ENCODE measurements at regions of chr6 and their contacts with region 1.

Region 1: GRCh38 chr6:10759312-10759839 is 11.8 kb downstream of the TMEM14B start:
- DNase-seq: peak; percentile 60 to 80 (median 76)
- H3K4me3 ChIP-seq: no peak overlapping the region
- H3K27ac ChIP-seq: no peak overlapping the region
- H3K4me1 ChIP-seq: no peaks in the 10 kb centered on the region
- H3K27me3 ChIP-seq: no peaks in the 10 kb centered on the region

Region 2: GRCh38 chr6:10742251-10742650 is 17.1 kb before region 1 on chr6:
- CTCF ChIA-PET with region 1: interaction called, 20 read pairs
- POLR2A ChIA-PET with region 1: no interaction called
- DNase-seq: no peak
- H3K4me3 ChIP-seq: no peak overlapping the region
- H3K27ac ChIP-seq: no peak overlapping the region
- H3K4me1 ChIP-seq: peaks cover 0 to 10% (median 5%) of the 10 kb centered on the region in 4 experiments
- H3K27me3 ChIP-seq: no peaks in the 10 kb centered on the region

Region 3: DNA sequence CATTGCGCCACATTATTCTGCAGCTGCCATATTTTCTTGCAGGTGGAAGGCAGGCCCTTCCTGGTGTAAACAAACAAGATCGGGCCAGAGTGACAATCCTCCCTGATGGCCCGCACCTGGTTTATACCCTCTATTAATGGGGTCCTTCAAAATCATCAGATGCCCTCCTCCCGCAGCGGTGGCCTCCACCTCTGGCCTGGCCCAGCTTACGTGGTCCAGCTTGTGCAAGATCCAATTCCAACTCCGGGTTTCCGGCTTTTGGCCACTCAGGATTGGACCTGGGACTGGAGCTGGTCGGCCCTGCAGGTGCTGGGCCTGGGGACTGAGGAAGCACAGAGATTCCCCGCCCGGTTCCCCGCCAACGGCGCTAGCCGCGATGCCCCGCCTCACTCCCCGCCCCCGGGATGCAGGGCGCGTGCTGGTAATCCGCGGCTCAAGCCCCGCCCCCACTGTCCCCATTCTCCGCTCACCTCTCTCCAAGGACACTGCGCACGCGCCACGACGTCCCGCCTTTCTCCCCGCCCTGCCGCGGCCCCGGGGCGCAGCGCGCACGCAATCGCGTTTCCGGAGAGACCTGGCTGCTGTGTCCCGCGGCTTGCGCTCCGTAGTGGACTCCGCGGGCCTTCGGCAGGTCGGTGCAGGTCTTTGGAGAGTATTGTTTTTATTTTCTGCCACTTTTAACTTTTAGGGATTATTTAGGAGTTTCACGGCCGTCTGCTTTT is 12.0 kb before region 1 on chr6 and contains the start of gene TMEM14B:
- CTCF ChIA-PET with region 1: interaction called, 20 read pairs
- POLR2A ChIA-PET with region 1: no interaction called
- DNase-seq: peak; percentile 95 to 98 (median 97)
- H3K4me3 ChIP-seq: peak within 1 kb of the TSS; percentile 64 to 91 (median 83)
- H3K27ac ChIP-seq: peak within 1 kb of the TSS; percentile 84 to 94
- H3K4me1 ChIP-seq: peaks cover 11 to 31% (median 16%) of the 10 kb centered on the region in 4 experiments
- H3K27me3 ChIP-seq: no peaks in the 10 kb centered on the region

Region 4: GRCh38 chr6:10995114-10995707 is 235.8 kb after region 1 on chr6:
- CTCF ChIA-PET with region 1: no interaction called
- POLR2A ChIA-PET with region 1: no interaction called
- DNase-seq: no peak
- H3K4me3 ChIP-seq: no peak overlapping the region
- H3K27ac ChIP-seq: no peak overlapping the region
- H3K4me1 ChIP-seq: no peaks in the 10 kb centered on the region
- H3K27me3 ChIP-seq: no peaks in the 10 kb centered on the region

Measured in common myeloid progenitor, CD34-positive (primary cell).